Esophagus muscularis mucosa (tissue), 4 donors: ENCODE measurements at regions of chr12 and their contacts with region 1.

Region 1: GRCh38 chr12:42238240-42239140 is at the start of gene YAF2:
- DNase-seq: peak; percentile 97
- H3K4me3 ChIP-seq: peak within 1 kb of the TSS; percentile 87 to 94 (median 90)
- H3K27ac ChIP-seq: peak within 1 kb of the TSS; percentile 93 to 98 (median 96)
- H3K4me1 ChIP-seq: peaks cover 31 to 49% (median 41%) of the 10 kb centered on the region in 4 donors
- H3K27me3 ChIP-seq: no peaks in the 10 kb centered on the region
- CTCF ChIP-seq: no peak
- EP300 ChIP-seq: no peak
- POLR2A ChIP-seq: no peak
- total RNA-seq, gene YAF2: 16.8 to 30.3 (median 20.4) TPM

Region 2: GRCh38 chr12:42144408-42145196 is 93.9 kb before region 1 on chr12 and contains the start of gene GXYLT1:
- intact Hi-C with region 1: loop called (anchors 2 kb)
- DNase-seq: peak; percentile 94
- H3K4me3 ChIP-seq: peak within 1 kb of the TSS; percentile 78 to 89 (median 82)
- H3K27ac ChIP-seq: peak within 1 kb of the TSS; percentile 87 to 95 (median 90)
- H3K4me1 ChIP-seq: peaks cover 15 to 32% (median 24%) of the 10 kb centered on the region in 4 donors
- H3K27me3 ChIP-seq: no peaks in the 10 kb centered on the region
- CTCF ChIP-seq: peak in 1 of 3 experiments; percentile 3
- EP300 ChIP-seq: no peak
- POLR2A ChIP-seq: peak; percentile 32
- total RNA-seq, gene GXYLT1: 9.7 to 13.7 (median 12.1) TPM

Region 3: DNA sequence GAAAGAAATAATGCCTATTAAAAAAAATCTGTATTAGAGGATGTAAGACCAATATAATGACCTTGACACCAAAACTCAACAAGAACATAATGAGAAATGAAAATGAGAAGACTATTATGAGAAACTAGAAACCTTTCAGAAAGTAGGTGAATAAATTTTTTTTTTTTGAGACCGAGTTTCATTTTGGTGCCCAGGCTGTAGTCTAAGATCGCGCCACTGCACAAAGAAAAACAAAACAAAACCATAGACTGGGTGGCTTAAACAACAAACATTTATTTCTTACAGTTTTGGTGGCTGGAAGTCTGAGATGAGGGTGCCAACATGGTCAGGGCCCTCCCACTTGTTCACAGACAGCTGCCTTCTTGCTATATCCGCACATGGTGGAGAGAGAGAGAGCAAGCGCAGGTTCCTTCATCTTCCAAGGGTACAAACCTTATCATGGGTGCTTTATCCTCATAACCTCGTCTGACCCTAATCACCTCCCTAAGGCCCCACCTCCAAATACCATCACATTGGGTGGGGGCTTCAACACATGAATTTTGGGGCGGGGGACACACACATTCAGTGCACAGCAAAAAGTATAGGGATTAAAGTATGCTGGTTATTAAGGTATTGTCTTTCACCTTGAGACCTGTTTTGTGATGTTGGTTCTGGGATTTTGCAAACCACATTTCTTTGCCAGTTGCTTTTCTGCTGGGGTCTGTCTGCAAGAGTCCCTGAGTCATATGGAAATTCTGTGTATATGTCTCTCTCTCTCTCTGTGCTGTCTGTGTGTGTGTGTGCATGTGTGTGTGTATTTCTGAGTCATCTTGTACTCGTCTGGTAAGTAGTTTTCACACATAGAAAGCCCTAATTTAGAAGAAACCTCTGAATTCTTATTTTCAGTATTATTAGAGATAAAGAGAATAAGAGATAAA is 61.2 kb after region 1 on chr12:
- intact Hi-C with region 1: no loop called
- DNase-seq: no peak
- H3K4me3 ChIP-seq: no peak overlapping the region
- H3K27ac ChIP-seq: no peak overlapping the region
- H3K4me1 ChIP-seq: no peaks in the 10 kb centered on the region
- H3K27me3 ChIP-seq: no peaks in the 10 kb centered on the region
- CTCF ChIP-seq: no peak
- EP300 ChIP-seq: no peak
- POLR2A ChIP-seq: no peak